HEK293 (cell line): ENCODE measurements at regions of chr6 and their contacts with region 1.

Region 1: GRCh38 chr6:44265007-44265721 is at the start of gene NFKBIE:
- H3K4me3 ChIP-seq: peak within 1 kb of the TSS; percentile 62
- H3K27ac ChIP-seq: peak within 1 kb of the TSS; percentile 76; the same call in 1 of the 2 replicates
- H3K4me1 ChIP-seq: peaks cover 4% of the 10 kb centered on the region; the same call in 1 of the 2 replicates
- CTCF ChIP-seq: peak; percentile 98

Region 2: GRCh38 chr6:44278774-44279697 is 13.9 kb after region 1 on chr6:
- CTCF ChIA-PET with region 1: interaction called, 32 read pairs
- POLR2A ChIA-PET with region 1: interaction called, 5 read pairs
- H3K4me3 ChIP-seq: no peak overlapping the region
- H3K27ac ChIP-seq: no peak overlapping the region
- H3K4me1 ChIP-seq: no peaks in the 10 kb centered on the region
- CTCF ChIP-seq: no peak

Region 3: GRCh38 chr6:44297063-44298038 is 32.2 kb after region 1 on chr6:
- CTCF ChIA-PET with region 1: interaction called, 117 read pairs
- POLR2A ChIA-PET with region 1: no interaction called
- H3K4me3 ChIP-seq: peak overlapping the region; percentile 44
- H3K27ac ChIP-seq: no peak overlapping the region
- H3K4me1 ChIP-seq: no peaks in the 10 kb centered on the region; the same call in 1 of the 2 replicates
- CTCF ChIP-seq: no peak